IMR-90 (cell line): ENCODE measurements at regions of chr1 and their contacts with region 1.

Region 1: GRCh38 chr1:29235955-29236684 is at the start of gene PTPRU:
- DNase-seq: peak; percentile 58
- ATAC-seq: peak; percentile 91
- H3K4me3 ChIP-seq: peak within 1 kb of the TSS; percentile 61
- H3K27ac ChIP-seq: peak within 1 kb of the TSS; percentile 3; the same call in 1 of the 2 replicates
- H3K4me1 ChIP-seq: peaks cover 12% of the 10 kb centered on the region
- H3K27me3 ChIP-seq: peaks cover 4% of the 10 kb centered on the region; the same call in 1 of the 2 replicates
- CTCF ChIP-seq: peak; percentile 97
- POLR2A ChIP-seq: 0 out of 2 replicates have a peak, but pooled peaks have one; percentile 36
- RAD21 ChIP-seq: peak; percentile 95
- total RNA-seq, gene PTPRU: 5.0 and 7.0 TPM in 2 replicates

Region 2: DNA sequence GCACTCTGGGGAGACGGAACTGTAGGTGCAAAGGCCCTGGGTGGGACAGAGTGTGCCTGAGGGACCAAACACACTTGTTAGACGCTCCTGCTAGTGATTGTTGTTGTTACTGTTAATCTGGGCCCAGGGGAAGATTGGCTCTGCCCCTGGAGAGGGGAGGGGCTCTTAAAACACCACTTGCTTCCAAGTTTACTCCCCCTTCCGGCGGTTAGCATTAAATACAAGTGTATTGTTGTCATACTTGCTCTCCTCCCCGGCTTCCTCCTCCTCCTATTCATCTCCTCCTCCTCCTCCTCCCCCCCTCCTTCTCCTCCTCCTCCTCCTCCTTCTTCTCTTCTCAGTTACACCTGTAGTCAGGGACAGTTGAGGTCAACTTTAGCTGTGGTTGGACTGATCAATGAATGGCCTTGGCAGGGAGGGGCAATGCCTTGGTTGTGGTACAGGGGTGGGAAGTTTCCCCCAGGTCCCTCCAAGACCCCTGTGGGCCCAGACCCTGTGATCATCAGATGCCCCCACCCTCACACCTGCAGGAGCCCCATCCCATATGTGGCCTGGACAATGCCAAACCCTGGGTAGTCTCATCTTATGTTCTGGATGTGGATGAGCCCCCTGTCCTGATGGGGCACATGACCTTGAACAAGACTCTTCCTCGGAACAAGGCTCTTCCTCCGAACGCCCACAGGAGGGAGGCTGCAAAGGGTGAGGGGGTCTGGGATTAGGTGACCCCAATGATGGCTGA is 217.6 kb after region 1 on chr1:
- CTCF ChIA-PET with region 1: no interaction called
- POLR2A ChIA-PET with region 1: no interaction called
- dilution Hi-C with region 1: no loop called
- in situ Hi-C with region 1: loop called (anchors 10 kb)
- intact Hi-C with region 1: loop called (anchors 1 kb)
- DNase-seq: peak; percentile 53
- ATAC-seq: peak; percentile 75
- H3K4me3 ChIP-seq: no peak overlapping the region
- H3K27ac ChIP-seq: no peak overlapping the region
- H3K4me1 ChIP-seq: no peaks in the 10 kb centered on the region
- H3K27me3 ChIP-seq: no peaks in the 10 kb centered on the region; the same call in 1 of the 2 replicates
- CTCF ChIP-seq: peak; percentile 42
- POLR2A ChIP-seq: no peak
- RAD21 ChIP-seq: peak; percentile 32

Region 3: GRCh38 chr1:29793101-29793546 is 557.0 kb after region 1 on chr1:
- CTCF ChIA-PET with region 1: no interaction called
- POLR2A ChIA-PET with region 1: no interaction called
- dilution Hi-C with region 1: no loop called
- in situ Hi-C with region 1: no loop called
- intact Hi-C with region 1: loop called (anchors 5 kb)
- DNase-seq: peak; percentile 72
- ATAC-seq: peak; percentile 98
- H3K4me3 ChIP-seq: no peak overlapping the region
- H3K27ac ChIP-seq: no peak overlapping the region
- H3K4me1 ChIP-seq: no peaks in the 10 kb centered on the region
- H3K27me3 ChIP-seq: no peaks in the 10 kb centered on the region; the same call in 1 of the 2 replicates
- CTCF ChIP-seq: peak; percentile 83
- POLR2A ChIP-seq: no peak
- RAD21 ChIP-seq: peak; percentile 79

Region 4: DNA sequence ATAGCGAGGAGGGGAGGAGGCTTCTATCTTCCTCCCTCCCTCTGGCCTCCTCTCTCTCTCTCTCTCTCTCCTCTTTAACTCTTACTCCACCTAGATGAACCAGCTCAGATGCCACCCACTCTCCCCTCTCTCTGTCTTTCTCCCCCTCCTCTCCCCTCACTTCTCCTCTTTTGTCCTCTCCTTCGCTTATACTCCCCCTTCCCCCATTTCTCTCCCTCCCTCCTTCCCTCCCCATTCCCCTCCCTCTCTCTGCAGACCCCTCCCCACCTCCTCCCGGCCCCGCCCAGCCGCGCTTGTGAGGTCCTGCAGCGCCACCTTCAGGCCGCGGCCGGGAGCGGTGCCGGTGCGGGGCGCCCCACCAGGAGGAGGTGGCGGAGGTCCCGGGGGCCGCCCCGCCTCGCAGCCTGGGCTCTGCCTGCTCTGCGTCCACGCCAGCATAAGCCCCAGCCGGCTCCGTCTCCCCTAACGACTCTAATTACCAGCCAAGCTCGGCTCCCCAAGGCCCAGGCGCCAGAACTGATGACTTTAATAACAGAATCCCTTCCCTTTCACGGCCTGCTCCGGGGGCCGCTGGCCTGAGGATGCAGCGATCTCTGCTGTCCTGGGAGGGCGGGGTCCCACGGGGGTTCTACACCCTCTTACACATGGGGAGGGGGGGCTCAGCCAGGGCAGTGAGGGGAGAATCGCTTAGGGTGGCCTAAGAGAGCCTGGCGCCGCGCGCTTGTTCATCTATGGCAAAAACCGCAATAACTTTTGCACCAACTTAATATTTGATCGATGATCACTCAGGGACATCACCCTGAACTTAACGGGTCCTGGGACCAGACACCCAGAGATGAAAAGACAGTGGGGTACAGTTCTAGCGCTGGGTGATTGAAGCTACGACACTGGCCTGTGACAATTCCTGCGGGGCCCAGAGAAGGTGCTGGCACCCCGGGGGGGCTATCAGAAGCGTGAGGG is 850.0 kb after region 1 on chr1:
- CTCF ChIA-PET with region 1: no interaction called
- POLR2A ChIA-PET with region 1: no interaction called
- dilution Hi-C with region 1: no loop called
- in situ Hi-C with region 1: loop called (anchors 10 kb)
- intact Hi-C with region 1: loop called (anchors 2 kb)
- DNase-seq: peak; percentile 31
- ATAC-seq: peak; percentile 67
- H3K4me3 ChIP-seq: no peak overlapping the region
- H3K27ac ChIP-seq: peak overlapping the region; percentile 48; the same call in 1 of the 2 replicates
- H3K4me1 ChIP-seq: peaks cover 23% of the 10 kb centered on the region
- H3K27me3 ChIP-seq: no peaks in the 10 kb centered on the region; the same call in 1 of the 2 replicates
- CTCF ChIP-seq: peak; percentile 73
- POLR2A ChIP-seq: no peak
- RAD21 ChIP-seq: peak; percentile 74

Region 5: GRCh38 chr1:30111431-30111830 is 875.3 kb after region 1 on chr1:
- CTCF ChIA-PET with region 1: no interaction called
- POLR2A ChIA-PET with region 1: no interaction called
- dilution Hi-C with region 1: no loop called
- in situ Hi-C with region 1: no loop called
- intact Hi-C with region 1: loop called (anchors 1 kb)
- DNase-seq: peak; percentile 41
- ATAC-seq: peak; percentile 92
- H3K4me3 ChIP-seq: no peak overlapping the region
- H3K27ac ChIP-seq: no peak overlapping the region
- H3K4me1 ChIP-seq: no peaks in the 10 kb centered on the region
- H3K27me3 ChIP-seq: peaks cover 10% of the 10 kb centered on the region
- CTCF ChIP-seq: peak; percentile 72
- POLR2A ChIP-seq: no peak
- RAD21 ChIP-seq: peak; percentile 76

Region 6: GRCh38 chr1:30707412-30708360 is 1471.6 kb after region 1 on chr1:
- CTCF ChIA-PET with region 1: interaction called, 3 read pairs
- POLR2A ChIA-PET with region 1: no interaction called
- dilution Hi-C with region 1: no loop called
- in situ Hi-C with region 1: loop called (anchors 10 kb)
- intact Hi-C with region 1: loop called (anchors 2 kb)
- DNase-seq: peak; percentile 56
- ATAC-seq: peak; percentile 97
- H3K4me3 ChIP-seq: no peak overlapping the region
- H3K27ac ChIP-seq: no peak overlapping the region
- H3K4me1 ChIP-seq: no peaks in the 10 kb centered on the region
- H3K27me3 ChIP-seq: peaks cover 45% of the 10 kb centered on the region
- CTCF ChIP-seq: peak; percentile 98
- POLR2A ChIP-seq: peak; percentile 68; the same call in 1 of the 2 replicates
- RAD21 ChIP-seq: peak; percentile 100